ENCODE measurements at regions of chr9 and their contacts with region 1.

Region 1: DNA sequence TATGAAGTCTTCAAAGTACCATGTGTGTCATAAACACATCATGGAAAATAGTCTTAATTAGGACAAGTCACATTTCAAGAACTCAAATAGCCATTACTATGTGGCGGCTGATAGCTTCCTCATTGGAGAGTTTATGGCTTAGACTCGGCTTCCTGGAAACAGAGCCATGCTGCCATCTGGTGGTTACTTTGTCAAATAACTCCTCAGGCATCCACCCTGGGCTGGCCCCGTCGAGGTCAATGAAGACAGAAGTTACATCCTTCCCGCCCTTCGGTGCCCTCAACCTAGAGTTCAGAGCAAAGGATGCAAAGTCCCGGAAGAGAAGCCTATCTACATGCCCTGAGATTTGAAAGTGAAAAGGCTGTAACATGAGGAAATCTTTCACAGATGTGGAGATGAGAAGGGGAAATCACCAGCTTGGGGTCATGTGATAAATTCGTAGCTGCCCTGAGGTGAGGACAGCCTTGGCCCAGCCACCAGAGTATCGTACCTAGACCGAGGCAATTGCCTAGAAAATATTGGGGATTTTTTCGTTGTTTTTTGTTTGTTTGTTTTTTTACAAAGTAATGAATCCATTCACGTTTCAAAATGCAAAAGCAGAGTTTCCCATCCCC is 45.5 kb upstream of the ZNF169 start:
- DNase-seq: peak; percentile 82

Region 2: DNA sequence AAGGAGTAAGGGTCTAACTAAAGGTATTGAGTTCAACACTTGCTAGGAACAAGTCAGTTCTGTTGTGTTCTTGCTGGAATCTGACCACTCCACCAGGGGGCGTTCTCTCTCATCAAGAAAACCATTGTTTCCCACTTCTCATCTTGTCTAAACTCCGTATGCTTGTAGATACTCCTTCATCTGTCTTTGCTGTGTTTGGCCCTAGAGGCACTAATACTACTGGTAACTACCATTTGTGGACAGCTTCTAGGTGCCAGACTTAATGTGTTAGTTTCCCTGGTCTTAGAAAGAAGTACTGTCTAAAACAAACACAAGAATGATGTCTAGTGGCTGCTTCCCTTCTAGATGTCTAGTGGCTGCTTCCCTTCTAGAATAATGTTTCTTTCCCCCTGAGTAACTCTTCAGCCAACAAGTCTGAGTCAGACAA is 148.1 kb before region 1 on chr9:
- in situ Hi-C with region 1: loop called (anchors 25 kb)
- DNase-seq: peak; percentile 75

Region 3: GRCh38 chr9:94870793-94871558 is 657.4 kb after region 1 on chr9:
- in situ Hi-C with region 1: no loop called
- DNase-seq: no peak

Measured in KBM-7 (cell line).